CD8-positive, alpha-beta T cell (primary cell): ENCODE measurements at regions of chr12 and their contacts with region 1.

Region 1: DNA sequence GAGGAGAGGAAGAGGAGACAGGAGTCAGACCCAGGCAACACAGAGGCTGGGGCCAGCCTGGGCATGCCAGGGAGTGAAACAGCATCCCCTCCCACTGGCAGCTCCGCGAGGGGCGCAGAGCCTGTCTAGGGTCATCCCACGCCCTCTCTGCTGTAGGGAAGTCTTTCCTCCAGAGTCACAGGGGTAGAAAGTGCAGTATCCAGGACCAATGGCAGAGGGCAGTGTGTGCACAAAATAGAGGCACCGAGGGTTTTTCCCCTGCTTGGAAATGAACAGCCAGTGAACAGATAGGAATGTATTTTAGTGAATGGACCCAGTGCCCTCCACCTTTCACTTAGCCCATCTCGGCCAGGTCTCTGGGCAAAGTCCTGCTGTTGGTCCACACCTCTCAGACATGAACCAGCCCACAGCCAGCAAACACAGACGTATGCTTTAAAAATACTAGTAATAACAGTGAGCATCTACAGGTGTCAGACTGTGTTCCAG is 9.4 kb upstream of the KRT74 start:
- DNase-seq: peak; percentile 48 to 83 (median 70)
- ATAC-seq: peak; percentile 27
- H3K4me3 ChIP-seq: no peak overlapping the region
- H3K4me3 Mint-ChIP-seq: no peak overlapping the region
- H3K27ac ChIP-seq: no peak overlapping the region
- H3K27ac Mint-ChIP-seq: peak overlapping the region; percentile 52
- H3K4me1 ChIP-seq: peaks cover 45% of the 10 kb centered on the region
- H3K4me1 Mint-ChIP-seq: peaks cover 48% of the 10 kb centered on the region
- H3K27me3 ChIP-seq: no peaks in the 10 kb centered on the region
- H3K27me3 Mint-ChIP-seq: peaks cover 3% of the 10 kb centered on the region
- CTCF ChIP-seq: peak; percentile 76

Region 2: DNA sequence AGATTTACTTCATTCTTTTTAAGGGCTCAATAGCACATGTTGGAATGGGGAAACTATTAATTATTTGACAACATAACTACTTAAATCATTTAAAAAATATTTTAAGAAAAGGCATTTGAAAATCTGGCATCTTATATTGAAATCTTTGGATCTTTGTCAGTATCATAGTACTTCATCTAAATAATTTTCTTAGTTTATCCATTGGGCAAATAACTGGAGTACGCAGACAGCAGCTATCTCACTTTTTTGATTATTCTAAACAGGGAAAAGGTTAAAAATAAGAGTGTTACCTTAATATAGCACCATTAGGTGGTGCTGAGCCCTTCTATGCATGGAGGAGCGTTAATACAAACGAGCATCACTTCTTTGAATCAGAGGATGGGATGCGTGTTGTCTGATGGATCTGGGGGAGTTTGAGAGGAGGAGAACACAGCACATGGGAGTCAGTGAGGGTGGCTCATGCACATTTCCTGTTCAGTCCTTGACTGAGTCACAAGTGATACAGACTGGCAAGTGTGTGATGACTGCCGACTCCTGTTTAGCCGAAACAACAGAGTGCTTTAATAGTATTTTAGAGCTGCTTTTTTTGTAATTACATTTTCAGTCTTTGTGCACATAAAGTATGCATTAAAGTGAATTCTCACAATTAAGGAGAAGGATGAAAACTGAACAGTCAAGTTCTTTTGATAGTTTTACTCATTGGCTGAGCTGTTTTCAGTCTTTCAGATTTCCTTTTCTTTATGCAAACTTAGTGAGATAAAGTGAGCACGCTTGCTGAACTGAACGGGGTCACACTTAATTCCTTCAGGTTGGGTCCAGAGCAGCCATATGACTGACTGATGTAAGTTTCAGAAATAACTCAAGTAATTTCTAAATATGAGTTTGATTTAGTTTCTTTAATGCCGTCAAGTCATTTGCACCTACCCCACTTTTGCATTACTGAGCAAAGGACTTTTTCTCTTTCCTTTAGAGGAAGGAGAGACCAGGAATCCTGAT is 1985.5 kb before region 1 on chr12:
- CTCF ChIA-PET with region 1: no interaction called
- POLR2A ChIA-PET with region 1: no interaction called
- intact Hi-C with region 1: no loop called
- DNase-seq: peak in 7 of 9 experiments; percentile 21 to 53 (median 34)
- ATAC-seq: peak; percentile 97
- H3K4me3 ChIP-seq: no peak overlapping the region
- H3K4me3 Mint-ChIP-seq: peak overlapping the region; percentile 2
- H3K27ac ChIP-seq: no peak overlapping the region
- H3K27ac Mint-ChIP-seq: peak overlapping the region; percentile 29
- H3K4me1 ChIP-seq: peaks cover 10% of the 10 kb centered on the region
- H3K4me1 Mint-ChIP-seq: peaks cover 37% of the 10 kb centered on the region
- H3K27me3 ChIP-seq: no peaks in the 10 kb centered on the region
- H3K27me3 Mint-ChIP-seq: no peaks in the 10 kb centered on the region
- CTCF ChIP-seq: no peak

Region 3: GRCh38 chr12:51678086-51678724 is 904.8 kb before region 1 on chr12:
- CTCF ChIA-PET with region 1: no interaction called
- POLR2A ChIA-PET with region 1: no interaction called
- intact Hi-C with region 1: no loop called
- DNase-seq: peak in 4 of 9 experiments; percentile 11 to 56 (median 29)
- ATAC-seq: peak; percentile 70
- H3K4me3 ChIP-seq: no peak overlapping the region
- H3K4me3 Mint-ChIP-seq: no peak overlapping the region
- H3K27ac ChIP-seq: no peak overlapping the region
- H3K27ac Mint-ChIP-seq: no peak overlapping the region
- H3K4me1 ChIP-seq: no peaks in the 10 kb centered on the region
- H3K4me1 Mint-ChIP-seq: peaks cover 6% of the 10 kb centered on the region
- H3K27me3 ChIP-seq: no peaks in the 10 kb centered on the region
- H3K27me3 Mint-ChIP-seq: peaks cover 3% of the 10 kb centered on the region
- CTCF ChIP-seq: peak; percentile 63

Region 4: GRCh38 chr12:52372216-52373154 is 210.5 kb before region 1 on chr12:
- CTCF ChIA-PET with region 1: interaction called, 15 read pairs
- POLR2A ChIA-PET with region 1: no interaction called
- intact Hi-C with region 1: no loop called
- DNase-seq: peak; percentile 31 to 75 (median 60)
- ATAC-seq: no peak
- H3K4me3 ChIP-seq: no peak overlapping the region
- H3K4me3 Mint-ChIP-seq: no peak overlapping the region
- H3K27ac ChIP-seq: no peak overlapping the region
- H3K27ac Mint-ChIP-seq: no peak overlapping the region
- H3K4me1 ChIP-seq: no peaks in the 10 kb centered on the region
- H3K4me1 Mint-ChIP-seq: no peaks in the 10 kb centered on the region
- H3K27me3 ChIP-seq: peaks cover 0 to 2% of the 10 kb centered on the region in 2 experiments
- H3K27me3 Mint-ChIP-seq: peaks cover 21% of the 10 kb centered on the region
- CTCF ChIP-seq: peak; percentile 34

Region 5: DNA sequence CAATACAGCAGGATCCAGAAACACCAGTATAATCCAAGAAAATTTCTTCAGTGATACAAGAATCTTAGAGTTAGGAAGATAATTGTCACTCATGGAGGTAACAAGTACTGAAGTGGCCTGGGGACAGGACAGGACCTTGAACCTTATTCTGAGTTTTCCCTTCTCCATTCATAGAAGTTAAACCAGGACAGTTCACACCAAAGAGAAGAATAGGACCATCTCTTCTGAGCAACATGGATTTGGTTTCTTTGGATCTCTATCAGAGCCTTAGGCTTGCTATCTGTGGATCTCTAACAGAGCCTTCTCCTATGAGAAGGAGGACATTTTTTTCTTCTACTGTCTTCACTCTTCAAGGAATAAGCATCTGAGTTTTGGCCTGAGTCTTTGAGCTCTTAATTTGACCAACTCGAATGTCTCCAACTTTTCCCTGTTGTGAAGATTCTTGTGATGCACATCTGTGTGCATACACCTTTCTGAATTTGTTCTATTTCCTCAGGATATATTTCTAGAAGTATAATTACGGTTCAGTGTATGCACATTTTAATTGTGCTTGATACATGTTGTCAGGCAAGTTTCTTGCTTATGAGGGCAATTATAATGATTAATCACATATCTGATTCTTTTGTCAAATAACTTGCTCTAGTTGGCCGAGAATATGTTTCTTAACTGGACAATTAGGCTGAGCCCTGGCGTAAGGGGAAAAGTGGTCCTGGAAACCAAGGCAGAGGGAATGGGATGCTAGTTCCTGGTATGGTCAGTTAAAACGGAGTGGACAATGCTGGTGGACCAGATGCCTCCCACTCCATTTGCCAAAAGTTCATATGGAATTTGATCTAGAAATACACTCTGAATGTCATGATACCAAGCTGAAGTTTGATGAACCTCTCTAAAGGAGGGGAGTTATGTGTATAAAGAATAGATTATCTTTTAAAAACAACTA is 96.6 kb before region 1 on chr12:
- CTCF ChIA-PET with region 1: no interaction called
- POLR2A ChIA-PET with region 1: no interaction called
- intact Hi-C with region 1: no loop called
- DNase-seq: no peak
- ATAC-seq: no peak
- H3K4me3 ChIP-seq: no peak overlapping the region
- H3K4me3 Mint-ChIP-seq: no peak overlapping the region
- H3K27ac ChIP-seq: no peak overlapping the region
- H3K27ac Mint-ChIP-seq: no peak overlapping the region
- H3K4me1 ChIP-seq: no peaks in the 10 kb centered on the region
- H3K4me1 Mint-ChIP-seq: no peaks in the 10 kb centered on the region
- H3K27me3 ChIP-seq: no peaks in the 10 kb centered on the region
- H3K27me3 Mint-ChIP-seq: peaks cover 48% of the 10 kb centered on the region
- CTCF ChIP-seq: no peak

Region 6: GRCh38 chr12:52608831-52609630 is 26.0 kb after region 1 on chr12:
- CTCF ChIA-PET with region 1: interaction called, 94 read pairs
- POLR2A ChIA-PET with region 1: interaction called, 32 read pairs
- intact Hi-C with region 1: loop called (anchors 1 kb)
- DNase-seq: peak in 4 of 9 experiments; percentile 26 to 60 (median 40)
- ATAC-seq: peak; percentile 29
- H3K4me3 ChIP-seq: no peak overlapping the region
- H3K4me3 Mint-ChIP-seq: peak overlapping the region; percentile 38
- H3K27ac ChIP-seq: peak overlapping the region in 1 of 2 experiments; percentile 5
- H3K27ac Mint-ChIP-seq: peak overlapping the region; percentile 95
- H3K4me1 ChIP-seq: peaks cover 97% of the 10 kb centered on the region
- H3K4me1 Mint-ChIP-seq: peaks cover 94% of the 10 kb centered on the region
- H3K27me3 ChIP-seq: no peaks in the 10 kb centered on the region
- H3K27me3 Mint-ChIP-seq: no peaks in the 10 kb centered on the region
- CTCF ChIP-seq: no peak

Region 7: DNA sequence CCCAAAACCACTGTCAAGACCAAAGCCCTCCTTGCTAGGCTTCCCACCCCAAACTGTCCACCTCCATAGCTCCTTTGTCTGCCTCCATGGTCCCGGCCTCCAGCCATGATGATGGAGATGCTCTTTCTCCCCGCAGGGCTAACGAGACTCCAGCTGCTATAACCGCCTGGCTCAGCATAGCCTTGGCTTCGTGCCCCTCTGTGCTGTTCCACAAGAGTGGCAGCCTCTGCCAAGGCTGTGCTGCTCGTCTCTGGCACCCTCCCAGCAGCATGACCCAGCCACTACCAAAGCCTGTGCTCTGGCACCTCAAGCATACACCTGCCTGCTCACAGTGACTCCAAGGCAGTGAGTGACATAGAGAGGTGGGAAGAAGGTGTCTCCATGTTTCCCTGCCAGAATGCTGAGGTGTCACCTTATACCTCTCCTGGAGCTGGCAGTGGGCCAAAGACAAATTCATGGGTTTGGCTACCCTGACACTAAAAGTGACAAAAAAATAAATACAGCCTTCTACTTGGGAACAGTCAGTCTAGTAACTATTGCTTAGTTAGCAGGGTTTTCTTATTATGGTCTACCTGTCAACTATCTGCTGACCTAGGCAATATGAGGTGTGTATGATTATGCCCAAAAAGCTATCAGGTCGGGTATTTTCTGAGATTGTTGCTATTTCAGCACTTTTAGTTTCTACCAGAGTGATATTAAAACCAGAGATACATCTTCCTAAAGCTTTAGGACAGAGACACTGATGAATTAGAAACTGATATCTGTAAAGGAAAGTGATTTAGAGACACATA is 51.4 kb after region 1 on chr12:
- CTCF ChIA-PET with region 1: interaction called, 10 read pairs
- POLR2A ChIA-PET with region 1: interaction called, 4 read pairs
- intact Hi-C with region 1: no loop called
- DNase-seq: peak in 1 of 9 experiments; percentile 43
- ATAC-seq: no peak
- H3K4me3 ChIP-seq: no peak overlapping the region
- H3K4me3 Mint-ChIP-seq: no peak overlapping the region
- H3K27ac ChIP-seq: no peak overlapping the region
- H3K27ac Mint-ChIP-seq: peak overlapping the region; percentile 19
- H3K4me1 ChIP-seq: peaks cover 59% of the 10 kb centered on the region
- H3K4me1 Mint-ChIP-seq: peaks cover 68% of the 10 kb centered on the region
- H3K27me3 ChIP-seq: no peaks in the 10 kb centered on the region
- H3K27me3 Mint-ChIP-seq: no peaks in the 10 kb centered on the region
- CTCF ChIP-seq: no peak

Region 8: DNA sequence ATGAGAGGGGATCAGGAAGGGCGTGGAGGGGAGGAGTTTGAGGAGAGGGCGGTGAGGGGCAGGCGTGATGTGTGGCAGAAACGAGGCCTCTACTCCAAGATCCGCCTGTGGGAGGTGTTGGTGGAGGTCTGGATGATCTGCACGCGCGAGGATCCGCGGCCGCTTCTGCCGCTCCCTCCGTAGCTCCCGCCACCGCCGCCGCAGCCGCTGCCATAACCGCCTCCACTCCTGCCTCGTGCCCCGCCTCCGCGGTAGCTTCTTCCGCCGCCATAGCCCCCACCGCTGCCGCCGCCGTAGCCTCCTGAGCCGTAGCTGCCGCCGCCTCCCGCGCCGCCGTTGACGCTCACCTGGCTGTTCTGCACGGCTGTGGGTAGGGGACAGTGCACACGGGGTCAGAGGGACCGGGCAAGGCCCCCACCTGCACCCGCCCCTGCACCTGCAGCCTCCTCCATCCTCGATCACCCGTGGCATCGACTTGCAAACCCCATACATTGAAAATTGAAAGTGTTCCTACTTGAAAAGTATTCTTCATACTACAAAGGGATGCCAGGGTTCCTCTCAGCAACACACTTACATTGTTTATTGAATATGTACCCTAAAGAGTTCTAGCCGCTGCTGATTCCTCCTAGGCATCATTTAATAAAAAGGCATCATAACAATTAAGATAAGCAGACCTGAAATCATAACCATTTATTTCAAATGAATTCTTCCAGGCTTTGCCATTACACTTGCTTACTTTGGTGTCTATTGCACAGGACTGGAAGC is 108.2 kb after region 1 on chr12:
- CTCF ChIA-PET with region 1: interaction called, 12 read pairs
- POLR2A ChIA-PET with region 1: no interaction called
- intact Hi-C with region 1: loop called (anchors 5 kb)
- DNase-seq: peak; percentile 22 to 78 (median 65)
- ATAC-seq: peak; percentile 84
- H3K4me3 ChIP-seq: peak overlapping the region; percentile 44 to 47
- H3K4me3 Mint-ChIP-seq: peak overlapping the region; percentile 84
- H3K27ac ChIP-seq: no peak overlapping the region
- H3K27ac Mint-ChIP-seq: peak overlapping the region; percentile 89
- H3K4me1 ChIP-seq: peaks cover 19% of the 10 kb centered on the region
- H3K4me1 Mint-ChIP-seq: peaks cover 42% of the 10 kb centered on the region
- H3K27me3 ChIP-seq: no peaks in the 10 kb centered on the region
- H3K27me3 Mint-ChIP-seq: no peaks in the 10 kb centered on the region
- CTCF ChIP-seq: no peak